ENCODE measurements at regions of chr6 and their contacts with region 1.

Region 1: DNA sequence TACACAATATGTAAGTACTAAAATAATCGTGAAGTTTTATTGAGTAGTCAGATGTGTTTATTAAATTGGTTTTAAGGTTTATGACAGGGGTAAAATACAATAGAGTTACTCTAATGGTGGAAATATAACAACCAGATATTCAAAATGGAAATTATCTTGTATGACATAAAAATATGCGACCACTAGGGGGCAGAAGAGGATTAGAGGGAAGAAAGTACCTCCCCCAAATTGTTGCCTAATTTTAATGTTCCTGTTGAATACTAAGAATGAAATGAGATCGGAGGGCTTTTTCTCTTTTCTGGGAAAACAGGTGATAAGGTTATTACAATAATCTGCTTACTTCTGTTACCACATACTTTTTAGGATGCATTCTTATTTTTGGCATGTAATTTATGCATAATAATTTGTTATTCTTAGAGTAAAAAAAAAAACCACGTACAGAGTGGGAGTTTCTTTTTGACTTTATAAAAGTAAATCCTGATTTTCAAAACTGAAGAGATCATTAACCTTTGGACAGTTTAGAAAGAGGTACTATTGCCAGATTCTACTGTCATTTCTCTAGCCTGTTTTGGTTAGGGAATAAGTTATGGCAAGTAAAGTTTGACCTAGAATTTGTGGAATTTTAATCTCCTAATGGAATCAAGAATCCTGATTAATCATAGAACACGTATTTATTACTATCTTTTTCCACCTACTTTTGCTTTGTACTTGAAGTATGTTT is 159.2 kb downstream of the CD109 start:
- DNase-seq: no peak
- H3K4me3 ChIP-seq: no peak overlapping the region
- H3K27ac ChIP-seq: no peak overlapping the region
- H3K4me1 ChIP-seq: no peaks in the 10 kb centered on the region
- H3K27me3 ChIP-seq: no peaks in the 10 kb centered on the region
- CTCF ChIP-seq: peak in 2 of 3 experiments; percentile 41 to 51; a peak in 2 of 4 replicates
- EP300 ChIP-seq: no peak
- POLR2A ChIP-seq: no peak
- RAD21 ChIP-seq: peak; percentile 70 to 76

Region 2: DNA sequence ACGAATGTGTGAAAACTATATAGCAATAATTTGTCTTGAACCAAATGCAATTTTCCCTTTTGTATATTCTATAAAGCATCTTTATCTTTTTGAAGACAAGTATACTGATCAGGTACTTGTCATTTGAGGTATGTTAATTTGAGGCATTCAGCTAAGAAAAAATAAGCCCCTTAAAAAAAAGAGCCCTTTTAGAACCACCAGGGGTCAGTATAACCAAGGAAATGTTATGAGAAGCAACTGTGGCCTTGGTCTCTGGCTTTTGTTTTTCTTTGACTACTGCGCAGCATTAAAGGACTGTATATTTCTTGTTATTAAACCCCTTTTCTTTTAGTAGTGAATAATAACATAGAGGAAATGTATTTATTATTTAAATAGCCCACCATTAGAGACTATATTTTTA is 116.1 kb before region 1 on chr6:
- CTCF ChIA-PET with region 1: interaction called, 11 read pairs
- POLR2A ChIA-PET with region 1: no interaction called
- DNase-seq: no peak
- H3K4me3 ChIP-seq: no peak overlapping the region
- H3K27ac ChIP-seq: no peak overlapping the region
- H3K4me1 ChIP-seq: no peaks in the 10 kb centered on the region
- H3K27me3 ChIP-seq: no peaks in the 10 kb centered on the region
- CTCF ChIP-seq: peak in 2 of 3 experiments; percentile 56 to 62; a peak in 2 of 4 replicates
- EP300 ChIP-seq: no peak
- POLR2A ChIP-seq: no peak
- RAD21 ChIP-seq: peak; percentile 90 to 92

Measured in H1 (cell line).